PC-9 (cell line): ENCODE measurements at regions of chr20 and their contacts with region 1.

Region 1: DNA sequence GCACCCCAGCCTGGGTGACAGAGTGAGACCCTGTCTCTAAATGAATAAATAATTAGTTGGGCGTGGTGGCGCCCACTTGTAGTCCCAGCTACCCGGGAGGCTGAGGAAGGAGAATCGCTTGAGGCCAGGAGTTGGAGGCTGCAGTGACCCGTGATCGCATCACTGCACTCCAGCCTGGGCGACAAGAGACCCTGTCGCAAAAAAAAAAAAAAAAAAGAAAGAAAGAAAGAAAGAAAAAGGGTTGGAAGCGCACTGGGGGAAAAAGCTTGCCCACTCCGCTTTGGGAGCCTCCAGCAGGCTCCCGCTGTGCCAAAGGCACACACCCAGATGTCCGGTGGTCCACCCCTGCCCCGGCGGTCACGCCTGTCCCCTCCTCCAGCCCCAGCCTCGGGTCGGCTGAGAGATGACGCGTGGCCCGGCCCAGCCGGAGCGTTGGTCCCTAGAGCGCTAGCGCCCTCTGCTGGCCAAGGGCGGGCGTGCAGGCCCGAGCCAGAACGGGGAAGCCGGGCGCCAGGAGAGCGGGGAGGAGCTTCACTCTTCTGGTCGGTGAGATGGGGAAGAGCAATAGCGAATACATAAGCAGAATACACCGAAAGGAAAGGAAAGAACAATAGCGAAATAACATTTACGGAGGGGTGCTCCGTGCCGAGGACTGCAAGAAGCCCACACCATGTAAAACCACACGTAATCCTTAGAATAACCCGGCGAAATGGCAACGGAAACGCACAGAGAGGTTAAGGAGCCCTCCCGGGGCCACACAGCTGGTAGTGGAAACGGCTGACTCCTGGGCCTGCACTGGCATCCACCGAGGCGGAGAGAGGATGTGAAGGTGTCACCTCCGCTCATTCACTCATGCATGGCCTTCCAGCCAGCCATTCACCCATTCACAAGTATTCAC is 41.7 kb downstream of the UBE2V1 start:
- DNase-seq: peak; percentile 69 to 96
- H3K4me3 ChIP-seq: peak overlapping the region; percentile 66
- H3K27ac ChIP-seq: no peak overlapping the region
- H3K4me1 ChIP-seq: 0 out of 2 replicates have a peak, but pooled peaks cover 5% of the 10 kb centered on the region
- H3K27me3 ChIP-seq: no peaks in the 10 kb centered on the region
- CTCF ChIP-seq: peak; percentile 100

Region 2: DNA sequence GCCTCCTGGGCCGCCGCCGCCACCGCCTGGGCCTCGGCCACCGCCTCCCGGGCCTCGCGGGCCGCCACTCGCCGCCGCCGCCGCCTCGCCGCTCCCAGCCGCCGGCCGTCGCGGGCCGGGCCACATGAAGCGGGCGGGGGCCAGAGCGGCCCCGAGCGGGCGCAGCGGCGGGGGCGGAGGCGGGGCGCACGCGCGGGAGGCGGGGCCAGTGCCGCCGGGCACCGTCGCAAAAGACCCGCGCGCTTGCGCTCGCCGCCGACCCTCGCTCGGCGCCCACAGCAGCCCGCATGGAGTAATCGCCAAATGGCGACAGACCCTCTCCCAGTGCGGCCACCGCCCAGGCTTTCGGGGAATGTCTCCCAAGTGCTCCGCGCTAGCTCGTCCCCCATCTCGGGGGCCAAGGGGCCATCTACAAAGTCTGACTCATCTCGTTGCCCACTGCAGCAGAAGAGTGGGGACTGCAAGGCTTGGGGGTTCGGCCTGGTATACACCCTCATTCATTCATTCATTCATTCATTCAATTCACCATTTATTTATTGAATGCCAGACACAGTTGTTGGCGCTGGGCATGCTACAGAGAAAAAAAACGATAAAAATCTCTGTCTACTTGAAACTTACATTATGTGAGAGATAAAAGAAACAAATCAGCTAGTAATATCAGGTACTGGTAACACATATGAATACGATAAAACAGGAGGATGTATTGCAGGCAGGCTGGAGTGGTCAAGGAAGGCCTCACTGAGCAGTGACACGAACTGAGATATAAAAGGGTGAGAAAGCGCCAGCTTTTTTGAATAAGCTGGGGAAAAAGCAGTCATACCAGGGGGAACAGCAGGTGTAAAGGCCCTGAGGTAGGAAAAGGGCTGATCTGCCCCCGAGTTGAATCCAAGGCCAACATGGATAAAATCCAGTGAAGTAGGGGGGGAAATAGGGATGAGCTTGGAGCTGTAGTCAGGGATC is 357.2 kb before region 1 on chr20 and contains the start of gene B4GALT5:
- CTCF ChIA-PET with region 1: no interaction called
- POLR2A ChIA-PET with region 1: interaction called, 11 read pairs
- intact Hi-C with region 1: no loop called
- DNase-seq: peak in 1 of 2 experiments; percentile 80
- H3K4me3 ChIP-seq: peak within 1 kb of the TSS; percentile 86
- H3K27ac ChIP-seq: peak within 1 kb of the TSS; percentile 84
- H3K4me1 ChIP-seq: peaks cover 62% of the 10 kb centered on the region
- H3K27me3 ChIP-seq: no peaks in the 10 kb centered on the region
- CTCF ChIP-seq: no peak
- total RNA-seq, gene B4GALT5: 61.7 and 63.1 TPM in 2 replicates

Region 3: GRCh38 chr20:49812463-49813304 is 258.6 kb before region 1 on chr20 and contains the start of gene SLC9A8:
- CTCF ChIA-PET with region 1: no interaction called
- POLR2A ChIA-PET with region 1: interaction called, 41 read pairs
- intact Hi-C with region 1: no loop called
- DNase-seq: peak; percentile 94 to 97
- H3K4me3 ChIP-seq: peak within 1 kb of the TSS; percentile 87
- H3K27ac ChIP-seq: peak within 1 kb of the TSS; percentile 98
- H3K4me1 ChIP-seq: peaks cover 70% of the 10 kb centered on the region
- H3K27me3 ChIP-seq: no peaks in the 10 kb centered on the region
- CTCF ChIP-seq: no peak
- total RNA-seq, gene SLC9A8: 12.7 and 21.4 TPM in 2 replicates

Region 4: DNA sequence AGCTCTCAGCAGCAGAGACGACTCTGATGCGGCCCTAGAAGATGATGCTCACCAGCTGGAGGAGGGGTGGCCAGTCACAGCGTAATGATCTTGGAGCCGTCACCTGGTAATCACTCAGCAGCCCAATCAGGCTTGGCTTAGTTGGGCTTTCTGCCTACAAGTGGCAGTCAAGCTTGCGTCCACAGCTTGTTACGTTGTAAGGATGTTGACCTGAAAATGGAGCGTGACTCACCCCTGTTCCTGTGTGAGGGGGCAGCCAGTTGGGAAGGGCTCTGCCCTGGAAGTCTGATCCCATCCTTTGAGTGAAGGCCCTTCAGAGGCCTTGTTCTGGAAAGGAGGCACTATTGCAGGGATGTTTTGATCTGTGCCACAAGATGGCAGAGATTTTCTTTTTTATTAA is 205.7 kb before region 1 on chr20:
- CTCF ChIA-PET with region 1: no interaction called
- POLR2A ChIA-PET with region 1: no interaction called
- intact Hi-C with region 1: no loop called
- DNase-seq: no peak
- H3K4me3 ChIP-seq: no peak overlapping the region
- H3K27ac ChIP-seq: no peak overlapping the region
- H3K4me1 ChIP-seq: peaks cover 8% of the 10 kb centered on the region
- H3K27me3 ChIP-seq: no peaks in the 10 kb centered on the region
- CTCF ChIP-seq: no peak

Region 5: GRCh38 chr20:49948809-49949548 is 122.3 kb before region 1 on chr20:
- CTCF ChIA-PET with region 1: interaction called, 14 read pairs
- POLR2A ChIA-PET with region 1: no interaction called
- intact Hi-C with region 1: no loop called
- DNase-seq: no peak
- H3K4me3 ChIP-seq: no peak overlapping the region
- H3K27ac ChIP-seq: no peak overlapping the region
- H3K4me1 ChIP-seq: no peaks in the 10 kb centered on the region
- H3K27me3 ChIP-seq: no peaks in the 10 kb centered on the region
- CTCF ChIP-seq: no peak

Region 6: DNA sequence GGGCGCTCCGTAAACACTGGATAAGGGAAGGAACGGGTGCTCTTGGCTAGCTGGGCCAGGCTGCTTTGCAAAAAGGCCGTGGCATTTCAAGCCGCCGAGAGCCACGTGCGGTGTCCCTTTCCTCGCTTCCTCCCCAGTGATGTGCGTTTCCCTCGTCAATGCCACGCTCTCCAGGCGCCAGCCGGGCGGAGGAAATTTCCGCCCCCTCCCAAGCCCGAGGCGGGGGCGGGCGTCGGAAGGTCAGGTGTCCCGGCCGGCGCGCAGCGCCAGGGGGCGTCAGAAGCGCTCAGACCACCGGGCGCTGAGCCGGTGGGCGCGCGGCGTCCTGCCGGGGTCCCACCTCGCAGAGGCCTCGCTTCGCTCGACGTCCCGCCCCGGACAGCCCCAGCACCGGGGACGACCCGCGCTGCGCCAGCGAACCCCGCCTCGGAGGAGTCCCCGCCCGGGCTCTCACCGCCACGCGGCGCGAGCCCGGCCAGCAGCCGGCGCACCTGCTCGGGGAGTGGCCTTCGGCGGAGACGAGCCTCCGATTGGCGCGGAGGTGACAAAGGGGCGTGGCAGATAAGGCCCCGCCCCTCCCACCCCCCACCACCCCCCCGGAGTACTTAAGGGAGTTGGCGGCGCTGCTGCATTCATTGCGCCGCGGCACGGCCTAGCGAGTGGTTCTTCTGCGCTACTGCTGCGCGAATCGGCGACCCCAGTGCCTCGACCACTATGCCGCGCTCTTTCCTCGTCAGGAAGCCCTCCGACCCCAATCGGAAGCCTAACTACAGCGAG is 88.7 kb before region 1 on chr20 and contains the start of gene SNAI1:
- CTCF ChIA-PET with region 1: interaction called, 31 read pairs
- POLR2A ChIA-PET with region 1: interaction called, 8 read pairs
- intact Hi-C with region 1: loop called (anchors 1 kb)
- DNase-seq: peak; percentile 82 to 88
- H3K4me3 ChIP-seq: peak within 1 kb of the TSS; percentile 75
- H3K27ac ChIP-seq: no peak within 1 kb of the TSS
- H3K4me1 ChIP-seq: peaks cover 10% of the 10 kb centered on the region
- H3K27me3 ChIP-seq: no peaks in the 10 kb centered on the region
- CTCF ChIP-seq: peak; percentile 68
- total RNA-seq, gene SNAI1: 2.2 and 3.6 TPM in 2 replicates

Region 7: GRCh38 chr20:50027611-50028105 is 43.6 kb before region 1 on chr20:
- CTCF ChIA-PET with region 1: no interaction called
- POLR2A ChIA-PET with region 1: no interaction called
- intact Hi-C with region 1: loop called (anchors 1 kb)
- DNase-seq: peak; percentile 63 to 78
- H3K4me3 ChIP-seq: no peak overlapping the region
- H3K27ac ChIP-seq: no peak overlapping the region
- H3K4me1 ChIP-seq: peaks cover 34% of the 10 kb centered on the region
- H3K27me3 ChIP-seq: no peaks in the 10 kb centered on the region
- CTCF ChIP-seq: no peak

Region 8: DNA sequence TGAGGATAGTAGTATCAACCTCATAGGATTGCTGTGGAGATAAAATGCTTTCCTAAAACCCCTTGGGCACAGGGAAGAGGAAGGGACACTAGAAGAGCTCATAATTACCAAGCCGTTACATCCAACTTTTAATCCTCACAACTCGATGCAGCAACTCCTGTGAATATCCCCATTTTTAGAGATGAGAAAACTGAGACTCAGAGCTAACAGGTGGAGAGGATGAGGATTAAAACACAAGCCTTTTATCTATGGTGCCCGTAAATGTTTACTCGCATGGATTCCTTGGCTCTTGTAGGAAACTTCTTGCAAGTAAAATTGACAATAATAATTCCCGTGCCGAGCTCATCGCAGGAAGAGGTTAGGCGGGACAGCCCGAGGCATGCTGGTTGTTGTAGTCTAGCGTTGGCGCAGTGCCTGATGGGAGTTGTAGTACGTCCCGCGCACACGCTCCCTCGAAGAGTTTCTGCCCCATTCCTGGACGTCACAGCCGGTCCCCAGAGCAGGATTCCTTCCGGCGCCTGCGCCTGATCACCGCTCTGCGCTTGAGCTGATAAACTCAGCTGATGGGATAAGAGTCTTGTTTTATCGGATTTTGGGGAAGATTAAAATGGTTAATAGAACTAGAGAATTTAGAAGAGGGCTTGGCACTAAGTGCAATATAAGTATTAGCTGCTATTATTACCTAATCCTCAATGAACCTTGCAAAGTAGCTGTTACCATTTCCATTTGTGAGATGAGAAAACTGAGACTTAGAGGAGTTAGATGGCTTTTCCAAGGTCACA is 44.5 kb after region 1 on chr20:
- CTCF ChIA-PET with region 1: interaction called, 16 read pairs
- POLR2A ChIA-PET with region 1: no interaction called
- intact Hi-C with region 1: no loop called
- DNase-seq: peak; percentile 90 to 95
- H3K4me3 ChIP-seq: peak overlapping the region; percentile 73
- H3K27ac ChIP-seq: peak overlapping the region; percentile 20; the same call in 1 of the 2 replicates
- H3K4me1 ChIP-seq: peaks cover 27% of the 10 kb centered on the region
- H3K27me3 ChIP-seq: no peaks in the 10 kb centered on the region
- CTCF ChIP-seq: no peak